Mucosa of descending colon (tissue), 3 donors: ENCODE measurements at regions of chr19 and their contacts with region 1.

Region 1: GRCh38 chr19:860481-861101 is 1.1 kb downstream of the CFD start:
- DNase-seq: peak; percentile 80 to 87 (median 85)
- ATAC-seq: peak; percentile 63
- H3K4me3 ChIP-seq: no peak overlapping the region
- H3K4me1 ChIP-seq: peaks cover 10% of the 10 kb centered on the region
- CTCF ChIP-seq: no peak

Region 2: DNA sequence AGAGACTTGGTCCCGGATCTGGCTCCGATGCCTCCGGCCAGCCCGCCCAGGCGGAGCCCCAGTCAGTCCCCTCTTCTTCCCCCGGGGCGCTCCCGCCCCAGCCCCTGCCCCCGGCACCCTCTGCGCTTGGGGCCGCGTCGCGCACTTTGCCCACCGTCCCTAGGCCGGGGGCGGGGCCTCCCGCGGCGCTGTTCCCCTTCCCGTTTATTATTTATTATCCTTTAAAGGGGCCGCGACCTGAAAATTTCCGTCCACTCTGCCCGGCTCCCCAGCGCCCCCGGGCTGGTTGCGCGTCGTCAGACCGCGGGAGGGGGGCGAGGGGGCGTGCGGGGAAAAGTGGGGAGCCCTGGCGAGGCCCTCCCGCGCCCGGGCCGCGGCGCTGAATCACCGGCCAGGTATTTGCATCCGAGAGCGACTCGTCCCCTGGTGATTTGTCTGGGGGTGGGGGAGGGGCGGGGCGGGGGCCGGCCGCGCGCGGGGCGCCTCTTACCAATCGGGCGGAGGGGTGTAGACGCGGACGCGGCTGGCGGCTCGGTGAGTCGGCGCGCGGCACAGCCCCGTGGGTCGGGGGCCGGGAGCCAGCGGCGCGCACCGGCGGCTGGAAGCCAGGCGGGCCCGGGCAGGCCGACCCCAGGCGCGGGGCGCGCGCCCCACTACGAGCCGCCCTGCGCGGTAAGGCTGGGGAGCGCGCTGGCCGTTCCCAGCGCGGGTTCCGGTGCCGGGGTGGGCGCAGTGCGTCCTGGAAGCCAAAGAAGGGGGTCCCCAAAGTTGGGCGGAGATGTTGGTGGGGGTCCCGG is 65.1 kb after region 1 on chr19 and contains the start of gene ARID3A:
- intact Hi-C with region 1: loop called in 1 of 2 experiments (anchors 10 kb)
- DNase-seq: peak; percentile 72 to 87 (median 86)
- ATAC-seq: peak; percentile 85
- H3K4me3 ChIP-seq: peak within 1 kb of the TSS; percentile 74
- H3K4me1 ChIP-seq: peaks cover 10% of the 10 kb centered on the region
- CTCF ChIP-seq: no peak
- total RNA-seq, gene ARID3A: 10.1 to 16.0 (median 14.5) TPM

Region 3: DNA sequence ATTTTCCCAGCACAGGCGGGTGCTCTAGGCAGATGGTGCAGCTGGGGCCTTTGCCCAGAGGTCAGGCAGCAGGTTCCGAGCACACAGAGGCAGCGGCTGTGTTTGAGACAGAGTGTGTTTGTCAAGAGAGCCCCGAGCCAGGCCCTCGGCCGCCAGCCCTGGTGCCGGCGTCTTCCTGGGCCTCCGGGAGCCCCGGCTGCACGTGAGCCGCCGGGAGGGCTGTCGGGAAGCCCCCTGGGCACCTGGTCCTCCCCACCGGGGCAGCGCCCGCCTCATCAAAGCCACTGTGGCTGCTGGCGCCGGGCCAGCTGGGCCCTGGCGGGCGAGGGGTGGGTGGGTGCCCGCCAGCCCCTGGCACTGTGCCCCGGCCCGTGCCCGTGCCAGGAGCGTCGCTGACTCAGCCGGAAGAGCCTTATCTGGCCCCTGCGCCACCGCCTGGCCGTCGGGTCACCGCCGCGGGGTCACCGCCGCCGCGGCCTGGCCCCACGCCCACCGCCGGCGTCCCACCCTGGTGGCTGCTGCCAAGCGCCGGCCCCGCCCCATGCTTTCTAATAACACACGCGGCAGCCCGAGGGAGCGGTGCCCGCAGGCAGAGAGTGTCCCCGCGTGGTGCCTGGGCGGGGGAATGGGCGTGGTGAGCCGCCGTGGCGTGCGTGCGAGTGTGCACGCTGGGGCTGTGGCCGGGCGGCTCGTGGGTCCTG is 80.2 kb after region 1 on chr19:
- intact Hi-C with region 1: no loop called
- DNase-seq: peak; percentile 83 to 88 (median 86)
- ATAC-seq: peak; percentile 88
- H3K4me3 ChIP-seq: no peak overlapping the region
- H3K4me1 ChIP-seq: peaks cover 24% of the 10 kb centered on the region
- CTCF ChIP-seq: no peak

Region 4: GRCh38 chr19:1009041-1009975 is 148.7 kb after region 1 on chr19:
- intact Hi-C with region 1: no loop called
- DNase-seq: peak in 2 of 3 donors; percentile 56 to 62
- ATAC-seq: peak; percentile 20
- H3K4me3 ChIP-seq: no peak overlapping the region
- H3K4me1 ChIP-seq: peaks cover 2% of the 10 kb centered on the region
- CTCF ChIP-seq: no peak